IMR-90 (cell line): ENCODE measurements at regions of chr18 and their contacts with region 1.

Region 1: DNA sequence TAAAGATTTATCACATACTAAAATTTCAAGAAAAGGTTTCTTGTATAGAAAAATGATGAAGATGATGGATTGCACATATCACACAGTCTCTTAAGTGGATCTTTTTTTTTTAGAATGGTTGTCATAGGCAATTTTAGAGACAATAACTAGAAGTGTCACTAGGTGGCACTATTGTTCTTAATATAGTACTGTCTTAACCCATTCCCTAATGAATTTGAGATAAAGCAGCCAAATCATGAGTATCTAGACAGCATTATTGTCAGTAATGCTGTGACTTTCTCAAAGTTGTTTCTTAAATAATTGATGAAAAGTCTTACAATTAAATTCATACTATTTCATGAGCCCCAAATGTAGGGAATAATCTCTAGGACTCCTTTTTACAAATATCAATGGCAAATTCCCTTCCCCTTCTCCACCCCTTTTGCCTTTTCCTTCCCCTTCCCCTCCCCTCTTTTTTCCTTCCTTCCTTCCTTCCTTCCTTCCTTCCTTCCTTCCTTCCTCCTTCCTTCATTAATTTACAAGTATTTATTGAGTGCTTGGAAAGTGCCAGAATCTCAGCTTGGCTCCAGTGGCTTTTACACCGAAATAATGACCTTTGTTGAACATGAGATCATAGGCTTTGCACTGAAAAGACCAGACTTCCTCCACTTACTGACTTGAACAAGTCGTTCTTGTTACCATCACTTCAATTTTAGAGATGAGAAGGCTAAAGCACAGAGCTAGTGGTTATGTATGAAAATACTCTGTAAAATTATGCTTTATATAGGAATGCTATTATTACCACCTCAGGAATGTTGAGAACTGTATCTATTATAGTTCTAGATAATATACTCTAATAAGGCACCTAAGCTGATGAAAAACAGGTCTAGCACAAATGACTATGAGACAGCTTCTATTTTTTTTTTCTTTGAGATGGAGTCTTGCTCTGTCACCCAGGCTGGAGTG is 19.8 kb downstream of the MYL12B start:
- DNase-seq: peak; percentile 86
- ATAC-seq: peak; percentile 79
- H3K4me3 ChIP-seq: no peak overlapping the region
- H3K27ac ChIP-seq: no peak overlapping the region
- H3K4me1 ChIP-seq: no peaks in the 10 kb centered on the region; the same call in 1 of the 2 replicates
- H3K27me3 ChIP-seq: no peaks in the 10 kb centered on the region
- CTCF ChIP-seq: peak; percentile 75
- POLR2A ChIP-seq: no peak
- RAD21 ChIP-seq: peak; percentile 89

Region 2: DNA sequence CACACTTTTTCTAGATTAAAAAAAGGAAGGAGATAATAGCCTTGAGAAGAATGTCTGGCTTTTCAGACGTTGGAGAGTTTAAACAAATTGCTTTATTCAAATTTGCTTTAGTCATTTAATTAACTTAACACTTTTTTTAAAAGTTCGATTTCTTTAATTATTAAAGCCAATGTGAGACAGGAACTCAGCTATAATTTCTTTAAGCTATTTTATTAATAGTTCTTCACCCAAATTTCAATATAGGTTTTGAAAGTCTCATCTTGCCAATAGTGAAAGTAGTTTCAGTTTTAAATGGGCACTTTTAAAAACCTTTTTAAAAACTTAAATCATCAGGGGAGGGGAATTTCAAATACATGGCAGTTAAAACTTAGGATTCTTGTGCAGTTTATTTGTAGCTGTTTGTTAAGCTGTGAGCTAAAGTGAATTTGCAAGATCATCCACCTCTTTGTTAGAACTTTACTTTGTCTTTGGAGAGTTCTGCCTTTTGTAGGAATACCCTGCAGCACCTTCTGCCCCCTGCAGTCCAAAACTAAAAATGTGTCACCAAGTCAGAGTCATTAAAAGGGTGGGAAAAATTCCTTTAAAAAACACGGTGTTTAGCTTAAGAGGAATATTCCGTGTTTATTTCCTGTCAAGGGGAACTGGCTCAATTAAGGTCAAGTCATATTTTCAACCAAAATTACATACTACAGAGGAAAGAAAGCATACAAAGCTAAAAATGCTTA is 172.8 kb after region 1 on chr18:
- CTCF ChIA-PET with region 1: interaction called, 3 read pairs
- POLR2A ChIA-PET with region 1: no interaction called
- dilution Hi-C with region 1: no loop called
- in situ Hi-C with region 1: loop called (anchors 5 kb)
- intact Hi-C with region 1: loop called (anchors 1 kb)
- DNase-seq: peak; percentile 72
- ATAC-seq: no peak
- H3K4me3 ChIP-seq: peak overlapping the region; percentile 85
- H3K27ac ChIP-seq: peak overlapping the region; percentile 30; the same call in 1 of the 2 replicates
- H3K4me1 ChIP-seq: peaks cover 16% of the 10 kb centered on the region
- H3K27me3 ChIP-seq: no peaks in the 10 kb centered on the region
- CTCF ChIP-seq: peak; percentile 60
- POLR2A ChIP-seq: no peak
- RAD21 ChIP-seq: peak; percentile 40; the same call in 1 of the 2 replicates

Region 3: DNA sequence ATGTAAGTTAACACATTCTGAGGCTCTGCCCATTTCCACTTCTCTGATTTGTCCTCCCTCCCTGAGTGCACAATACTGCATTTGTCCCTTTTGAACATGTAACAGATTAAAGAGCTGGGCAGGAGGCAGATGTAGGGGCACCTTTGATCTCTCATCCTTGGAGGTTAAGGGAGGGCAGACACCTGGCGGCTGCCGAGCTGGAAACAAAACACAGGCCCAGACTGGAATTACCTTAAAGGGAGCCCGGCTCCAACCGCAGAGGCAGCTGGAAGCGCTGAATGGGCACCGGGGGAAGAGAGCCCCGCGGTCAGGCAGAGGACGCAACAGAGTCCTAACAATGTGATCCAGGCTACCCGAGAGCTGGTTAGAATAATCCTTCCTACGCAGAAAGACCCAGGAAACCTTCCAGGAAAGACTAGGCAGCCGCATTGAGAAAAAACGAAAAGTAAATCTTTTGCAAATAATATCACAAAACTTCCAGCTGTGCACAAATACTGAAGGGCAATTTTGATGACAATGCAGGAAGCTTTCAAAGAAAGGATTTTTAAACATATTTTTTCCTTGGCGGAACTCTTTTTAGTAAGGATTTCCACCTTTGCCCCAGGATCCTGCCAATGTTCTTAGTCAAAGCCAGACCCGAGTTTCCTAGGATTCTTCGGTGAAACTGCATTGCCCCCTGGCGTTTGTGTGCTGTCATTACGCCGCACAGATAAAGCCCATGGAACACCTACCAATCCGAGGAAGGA is 384.2 kb after region 1 on chr18:
- CTCF ChIA-PET with region 1: interaction called, 13 read pairs
- POLR2A ChIA-PET with region 1: no interaction called
- dilution Hi-C with region 1: no loop called
- in situ Hi-C with region 1: loop called (anchors 5 kb)
- intact Hi-C with region 1: loop called (anchors 1 kb)
- DNase-seq: peak; percentile 91
- ATAC-seq: peak; percentile 96
- H3K4me3 ChIP-seq: no peak overlapping the region
- H3K27ac ChIP-seq: peak overlapping the region; percentile 72
- H3K4me1 ChIP-seq: peaks cover 7% of the 10 kb centered on the region
- H3K27me3 ChIP-seq: no peaks in the 10 kb centered on the region
- CTCF ChIP-seq: peak; percentile 94
- POLR2A ChIP-seq: no peak
- RAD21 ChIP-seq: peak; percentile 99

Region 4: DNA sequence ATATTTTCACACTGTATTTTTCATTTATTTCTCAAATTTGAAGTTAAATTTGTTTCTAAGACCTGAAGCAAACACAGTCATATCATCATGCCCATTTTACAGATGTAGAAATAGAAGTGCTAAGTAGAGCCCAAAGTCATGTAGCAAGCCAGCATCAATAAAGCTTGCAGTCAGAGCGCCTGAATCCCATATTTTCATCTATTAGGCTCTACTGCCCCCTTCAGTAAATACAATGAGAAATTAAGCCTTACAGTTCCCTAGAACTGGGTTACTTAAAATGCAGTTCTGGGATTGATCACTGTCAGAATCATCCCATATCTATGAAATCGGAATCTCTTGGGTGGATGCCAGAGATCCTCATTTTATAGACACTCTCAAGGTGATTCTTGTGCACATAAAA is 588.1 kb after region 1 on chr18:
- CTCF ChIA-PET with region 1: no interaction called
- POLR2A ChIA-PET with region 1: no interaction called
- dilution Hi-C with region 1: no loop called
- in situ Hi-C with region 1: loop called (anchors 5 kb)
- intact Hi-C with region 1: loop called (anchors 5 kb)
- DNase-seq: peak; percentile 76
- ATAC-seq: peak; percentile 87
- H3K4me3 ChIP-seq: no peak overlapping the region
- H3K27ac ChIP-seq: no peak overlapping the region
- H3K4me1 ChIP-seq: no peaks in the 10 kb centered on the region
- H3K27me3 ChIP-seq: peaks cover 3% of the 10 kb centered on the region; the same call in 1 of the 2 replicates
- CTCF ChIP-seq: peak; percentile 71
- POLR2A ChIP-seq: no peak
- RAD21 ChIP-seq: peak; percentile 83

Region 5: DNA sequence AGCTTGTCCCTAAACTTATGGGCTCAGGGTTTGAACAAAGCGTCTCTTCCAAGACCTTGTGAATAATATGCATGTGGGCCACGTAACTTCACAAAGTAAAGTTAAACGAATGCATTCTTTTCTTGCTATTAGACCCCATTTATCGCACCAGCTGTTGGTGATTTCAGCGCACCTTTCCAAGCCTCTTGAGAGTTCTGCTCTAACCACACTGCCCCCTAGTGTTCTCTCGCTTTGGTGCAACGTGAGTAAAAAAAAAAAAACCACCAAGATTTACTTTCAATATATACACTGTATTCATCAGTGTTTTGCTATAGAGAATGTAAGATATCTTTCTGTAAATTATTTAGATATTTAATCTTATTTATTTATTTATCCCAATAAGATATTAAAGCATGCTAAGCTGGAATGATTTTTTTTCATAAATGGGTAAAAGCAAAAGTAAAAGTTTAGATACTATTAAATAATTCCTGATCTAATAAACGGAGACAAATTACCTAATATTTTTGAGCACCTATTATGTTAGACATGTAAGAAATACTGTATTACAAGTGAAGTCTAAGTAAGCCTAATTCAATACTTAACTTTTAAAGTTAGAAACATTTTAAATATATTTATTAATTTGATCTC is 713.9 kb after region 1 on chr18:
- CTCF ChIA-PET with region 1: interaction called, 4 read pairs
- POLR2A ChIA-PET with region 1: no interaction called
- dilution Hi-C with region 1: no loop called
- in situ Hi-C with region 1: no loop called
- intact Hi-C with region 1: loop called (anchors 2 kb)
- DNase-seq: peak; percentile 82
- ATAC-seq: peak; percentile 72
- H3K4me3 ChIP-seq: no peak overlapping the region
- H3K27ac ChIP-seq: no peak overlapping the region
- H3K4me1 ChIP-seq: no peaks in the 10 kb centered on the region
- H3K27me3 ChIP-seq: no peaks in the 10 kb centered on the region
- CTCF ChIP-seq: peak; percentile 80
- POLR2A ChIP-seq: no peak
- RAD21 ChIP-seq: peak; percentile 76

Region 6: DNA sequence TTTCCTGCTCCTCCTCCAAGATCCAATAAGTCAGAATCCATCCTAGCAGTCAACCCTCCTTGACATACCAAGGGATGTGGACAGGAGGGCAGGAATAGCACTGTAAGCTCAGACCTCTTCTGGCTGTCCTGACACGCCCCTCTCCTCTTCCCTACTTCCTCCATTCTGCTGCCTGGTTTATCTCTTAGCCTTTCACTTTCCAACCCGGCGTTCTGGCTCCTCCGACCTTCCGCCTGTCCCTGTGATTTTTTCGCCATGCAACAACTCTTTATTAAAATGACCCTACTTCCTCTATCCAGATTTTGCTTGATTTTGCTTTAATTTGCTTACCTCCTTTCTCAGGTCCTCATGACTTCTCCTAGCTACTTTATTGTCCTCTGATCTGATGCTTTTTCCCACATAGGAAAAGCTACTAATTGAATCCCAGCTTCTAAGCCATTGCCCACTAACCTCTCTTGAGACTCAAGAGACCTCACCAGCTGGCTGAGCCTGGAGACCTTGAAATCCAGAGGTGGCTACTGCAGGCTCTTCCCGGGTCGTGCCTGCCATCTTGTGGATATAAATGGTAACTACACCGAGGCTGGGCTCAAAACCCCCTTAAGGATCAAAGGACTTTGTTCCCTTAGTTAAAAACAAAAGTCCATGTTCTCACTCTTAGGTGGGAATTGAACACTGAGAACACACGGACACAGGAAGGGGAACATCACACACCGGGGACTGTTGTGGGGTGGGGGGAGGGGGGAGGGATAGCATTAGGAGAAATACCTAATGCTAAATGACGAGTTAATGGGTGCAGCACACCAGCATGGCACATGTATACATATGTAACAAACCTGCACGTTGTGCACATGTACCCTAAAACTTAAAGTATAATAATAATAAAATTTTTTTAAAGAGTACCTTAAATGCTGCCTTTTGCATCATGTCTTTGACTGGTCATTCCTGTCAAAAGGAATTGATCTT is 1775.9 kb after region 1 on chr18:
- CTCF ChIA-PET with region 1: no interaction called
- POLR2A ChIA-PET with region 1: no interaction called
- dilution Hi-C with region 1: no loop called
- in situ Hi-C with region 1: no loop called
- intact Hi-C with region 1: loop called (anchors 10 kb)
- DNase-seq: peak; percentile 31
- ATAC-seq: peak; percentile 96
- H3K4me3 ChIP-seq: no peak overlapping the region
- H3K27ac ChIP-seq: no peak overlapping the region
- H3K4me1 ChIP-seq: no peaks in the 10 kb centered on the region
- H3K27me3 ChIP-seq: no peaks in the 10 kb centered on the region
- CTCF ChIP-seq: peak; percentile 66
- POLR2A ChIP-seq: no peak
- RAD21 ChIP-seq: peak; percentile 75